Activated T-helper 1 cell treated with anti-CD3 and anti-CD28 coated beads, Interleukin-12 subunit alpha, Interleukin-12 subunit beta, Interleukin-2, Interleukin-4 antibody, amounts not matched to agents 30 ng/mL and 10 ng/mL and 1 ng/mL, durations not matched to agents 14 hours and 24 hours and 36 hours (primary cell): ENCODE measurements at regions of chr10 and their contacts with region 1.

Region 1: GRCh38 chr10:99845837-99846382 is 63.5 kb downstream of the ABCC2 start:
- DNase-seq: peak; percentile 59
- H3K4me3 Mint-ChIP-seq: no peak overlapping the region
- H3K27ac Mint-ChIP-seq: no peak overlapping the region
- H3K4me1 Mint-ChIP-seq: peaks cover 11% of the 10 kb centered on the region
- H3K27me3 Mint-ChIP-seq: no peaks in the 10 kb centered on the region

Region 2: GRCh38 chr10:99870123-99870730 is 24.3 kb after region 1 on chr10:
- intact Hi-C with region 1: loop called (anchors 2 kb)
- DNase-seq: peak; percentile 8
- H3K4me3 Mint-ChIP-seq: peak overlapping the region; percentile 25
- H3K27ac Mint-ChIP-seq: peak overlapping the region; percentile 18
- H3K4me1 Mint-ChIP-seq: peaks cover 6% of the 10 kb centered on the region
- H3K27me3 Mint-ChIP-seq: peaks cover 56% of the 10 kb centered on the region

Region 3: DNA sequence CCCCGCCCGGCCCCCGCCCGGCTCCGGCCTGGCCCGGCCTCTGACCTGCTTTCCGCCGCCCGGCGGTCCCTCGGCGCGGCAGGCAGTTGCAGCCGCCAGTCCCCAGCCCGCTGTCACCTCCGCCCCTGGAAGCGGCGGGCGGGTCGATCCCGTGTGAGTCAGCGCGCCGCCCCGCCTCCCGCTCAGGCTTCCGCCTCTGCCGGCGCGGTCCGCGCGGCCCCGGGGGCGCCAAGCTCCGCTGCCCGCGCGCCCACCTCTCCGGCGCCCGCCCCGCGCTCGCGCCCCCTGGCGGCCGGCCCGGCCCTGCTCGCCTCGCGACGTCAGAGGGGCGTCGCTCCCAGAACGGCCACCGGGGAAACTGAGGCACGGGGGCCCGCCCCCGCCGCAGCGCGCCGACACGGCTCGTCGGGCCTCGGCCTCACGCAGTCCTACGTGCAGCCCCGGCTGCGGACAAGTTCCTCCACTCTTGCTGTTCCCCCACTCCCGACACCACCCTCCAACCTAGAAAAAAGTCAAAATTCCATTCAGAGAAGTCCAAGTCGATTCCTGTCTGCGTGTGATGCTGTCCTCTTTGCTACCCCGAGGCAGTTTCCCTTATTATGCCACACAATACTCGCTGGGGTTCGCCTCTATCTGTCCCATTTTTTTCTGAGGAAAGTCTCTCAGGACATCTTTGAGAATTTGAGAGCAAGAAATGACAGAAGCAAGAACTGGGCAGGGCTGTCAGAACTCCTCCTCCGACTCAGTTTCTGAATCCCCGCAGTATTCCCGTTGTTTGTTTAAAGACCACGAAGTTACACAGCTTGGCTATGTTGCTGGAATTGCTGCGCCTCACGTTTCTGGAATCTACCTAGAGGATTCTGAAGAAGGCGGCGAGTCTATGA is 164.1 kb after region 1 on chr10 and contains the start of gene DNMBP:
- intact Hi-C with region 1: loop called (anchors 1 kb)
- DNase-seq: peak; percentile 77
- H3K4me3 Mint-ChIP-seq: peak within 1 kb of the TSS; percentile 91
- H3K27ac Mint-ChIP-seq: peak within 1 kb of the TSS; percentile 83
- H3K4me1 Mint-ChIP-seq: peaks cover 45% of the 10 kb centered on the region
- H3K27me3 Mint-ChIP-seq: peaks cover 23% of the 10 kb centered on the region
- total RNA-seq, gene DNMBP: 1.4 and 1.5 TPM in 2 replicates

Region 4: DNA sequence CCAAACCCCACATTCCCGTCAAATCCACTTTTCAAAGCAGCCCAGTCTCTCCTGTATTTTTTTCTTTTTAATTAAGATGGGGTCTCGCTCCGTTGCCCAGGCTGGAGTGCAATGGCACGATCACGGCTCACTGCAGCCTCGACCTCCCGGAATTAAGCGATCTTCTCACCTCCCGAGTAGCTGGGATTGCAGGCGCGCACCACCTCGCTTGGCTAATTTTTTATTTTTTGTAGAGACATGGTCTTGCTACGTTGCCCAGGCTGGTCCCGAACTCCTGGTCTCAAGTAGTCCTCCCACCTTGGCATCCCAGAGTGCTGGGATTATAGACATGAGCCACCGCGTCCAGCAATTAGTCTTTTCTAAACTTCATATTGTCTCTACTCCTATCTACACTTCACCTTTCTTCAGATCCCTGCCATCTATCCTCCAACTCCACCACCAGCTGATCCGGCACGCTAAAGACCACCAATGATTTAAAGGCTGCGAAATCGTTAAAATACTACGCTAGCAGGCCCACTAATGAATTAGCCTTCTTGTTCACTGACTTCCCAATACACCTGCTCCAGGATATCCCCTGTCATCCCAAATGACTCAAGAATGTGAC is 384.0 kb after region 1 on chr10:
- intact Hi-C with region 1: loop called (anchors 10 kb)
- DNase-seq: no peak
- H3K4me3 Mint-ChIP-seq: peak overlapping the region; percentile 97
- H3K27ac Mint-ChIP-seq: peak overlapping the region; percentile 82
- H3K4me1 Mint-ChIP-seq: peaks cover 34% of the 10 kb centered on the region
- H3K27me3 Mint-ChIP-seq: no peaks in the 10 kb centered on the region

Region 5: DNA sequence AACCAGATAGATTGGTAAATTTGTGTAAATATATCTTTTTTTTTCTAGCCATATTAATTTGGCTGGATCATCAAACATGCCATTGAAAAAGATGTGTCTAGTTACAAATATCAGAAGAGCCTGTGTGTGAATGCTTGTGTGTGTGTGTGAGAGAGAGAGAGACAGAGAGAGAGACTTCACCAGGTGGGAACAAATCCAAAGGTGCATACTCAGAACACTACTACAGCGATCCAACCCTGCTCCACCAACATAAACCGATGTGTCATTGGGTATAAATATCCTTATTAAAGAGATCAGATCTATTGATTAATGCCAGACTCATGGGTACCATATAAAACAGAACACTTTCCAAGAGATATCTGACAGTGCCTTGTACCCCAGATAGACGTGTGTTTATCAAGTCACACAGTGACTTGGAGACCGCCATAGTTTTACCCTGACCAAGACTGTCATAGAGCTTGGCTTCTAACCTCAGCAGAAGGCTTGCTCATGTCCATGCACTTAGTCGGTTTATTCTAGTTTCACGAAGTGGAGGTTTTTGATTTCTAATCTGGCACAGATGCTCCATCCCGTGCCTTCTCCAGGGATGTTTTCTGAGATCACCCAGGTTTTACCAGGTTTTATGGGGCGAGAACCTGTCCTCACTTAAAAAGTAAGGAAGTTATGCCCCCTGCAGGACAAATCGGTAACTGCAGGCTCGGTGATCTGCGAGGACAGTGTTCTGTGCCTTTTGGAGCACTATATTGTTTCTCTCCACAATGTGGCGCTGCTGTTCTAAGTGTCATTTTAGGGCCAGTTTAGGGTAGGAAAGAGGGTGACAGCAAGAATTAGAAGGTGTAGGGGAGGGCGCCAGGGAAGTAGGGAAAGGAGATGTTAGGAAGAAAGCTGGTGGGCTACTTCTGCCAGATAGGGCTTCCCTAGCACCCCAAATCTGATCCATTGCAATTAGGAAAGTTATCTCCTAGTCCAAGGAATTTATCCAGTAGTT is 587.6 kb after region 1 on chr10:
- intact Hi-C with region 1: loop called (anchors 10 kb)
- DNase-seq: peak; percentile 89
- H3K4me3 Mint-ChIP-seq: no peak overlapping the region
- H3K27ac Mint-ChIP-seq: no peak overlapping the region
- H3K4me1 Mint-ChIP-seq: peaks cover 17% of the 10 kb centered on the region
- H3K27me3 Mint-ChIP-seq: no peaks in the 10 kb centered on the region

Region 6: GRCh38 chr10:100997360-100998182 is 1151.7 kb after region 1 on chr10:
- intact Hi-C with region 1: no loop called
- DNase-seq: peak; percentile 71
- H3K4me3 Mint-ChIP-seq: peak overlapping the region; percentile 88
- H3K27ac Mint-ChIP-seq: peak overlapping the region; percentile 92
- H3K4me1 Mint-ChIP-seq: peaks cover 29% of the 10 kb centered on the region
- H3K27me3 Mint-ChIP-seq: peaks cover 4% of the 10 kb centered on the region